Activated CD8-positive, alpha-beta memory T cell treated with anti-CD3 and anti-CD28 coated beads, Interleukin-2, amount 10 ng/mL, durations not matched to agents 7 days and 5 days (primary cell): ENCODE measurements at regions of chr7 and their contacts with region 1.

Region 1: GRCh38 chr7:35424869-35425495 is 171.1 kb upstream of the TBX20 start:
- DNase-seq: peak; percentile 65
- ATAC-seq: peak; percentile 71
- H3K4me3 Mint-ChIP-seq: no peak overlapping the region
- H3K27ac Mint-ChIP-seq: no peak overlapping the region
- H3K4me1 Mint-ChIP-seq: peaks cover 2% of the 10 kb centered on the region
- H3K27me3 Mint-ChIP-seq: peaks cover 10% of the 10 kb centered on the region

Region 2: GRCh38 chr7:35519971-35520809 is 95.2 kb after region 1 on chr7:
- CTCF ChIA-PET with region 1: interaction called, 32 read pairs
- DNase-seq: peak; percentile 72
- ATAC-seq: peak; percentile 76
- H3K4me3 Mint-ChIP-seq: no peak overlapping the region
- H3K27ac Mint-ChIP-seq: no peak overlapping the region
- H3K4me1 Mint-ChIP-seq: peaks cover 5% of the 10 kb centered on the region
- H3K27me3 Mint-ChIP-seq: peaks cover 33% of the 10 kb centered on the region